Cardiac septum (tissue), 1 donor: ENCODE measurements at regions of chr3 and their contacts with region 1.

Region 1: GRCh38 chr3:53709860-53710674 is 136.2 kb downstream of the CHDH start:
- DNase-seq: peak; percentile 86

Region 2: DNA sequence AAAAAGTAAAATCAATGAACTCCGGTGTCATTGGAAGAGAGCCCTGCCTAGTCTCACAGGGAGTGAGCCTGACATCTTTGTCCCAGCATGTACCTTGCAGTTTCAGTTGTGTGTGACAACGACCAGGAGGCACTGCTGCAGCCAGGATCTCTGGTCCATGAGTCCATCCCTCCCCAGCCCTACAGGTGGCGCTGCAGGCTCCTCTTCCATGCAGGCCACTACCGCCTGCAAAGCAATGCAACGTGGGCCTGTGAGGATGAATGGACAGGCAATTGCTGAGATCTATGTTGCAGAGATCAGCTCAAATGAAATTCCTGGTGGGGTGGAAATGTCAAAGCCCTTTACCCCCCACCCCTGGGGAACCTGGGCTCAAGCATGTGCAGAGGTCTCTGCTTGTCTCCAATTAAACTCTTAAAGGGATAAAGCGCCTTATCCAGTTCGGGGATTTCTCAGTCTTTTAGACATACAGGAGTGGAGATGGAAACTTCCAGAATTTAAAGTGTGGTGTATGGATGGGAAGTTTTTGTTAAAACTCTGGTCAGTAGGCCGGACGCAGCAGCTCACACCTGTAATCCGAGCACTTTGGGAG is 490.1 kb before region 1 on chr3:
- intact Hi-C with region 1: loop called (anchors 5 kb)
- DNase-seq: peak; percentile 94

Region 3: GRCh38 chr3:53303957-53304356 is 406.1 kb before region 1 on chr3:
- intact Hi-C with region 1: loop called (anchors 2 kb)
- DNase-seq: no peak

Region 4: GRCh38 chr3:53375019-53375418 is 335.0 kb before region 1 on chr3:
- intact Hi-C with region 1: loop called (anchors 5 kb)
- DNase-seq: no peak

Region 5: GRCh38 chr3:53616321-53616720 is 93.7 kb before region 1 on chr3:
- intact Hi-C with region 1: no loop called
- DNase-seq: no peak